GM18951 (cell line): ENCODE measurements at regions of chr13 and their contacts with region 1.

Region 1: GRCh38 chr13:49238651-49239050 is 9.1 kb upstream of the CDADC1 start:
- POLR2A ChIP-seq: no peak

Region 2: DNA sequence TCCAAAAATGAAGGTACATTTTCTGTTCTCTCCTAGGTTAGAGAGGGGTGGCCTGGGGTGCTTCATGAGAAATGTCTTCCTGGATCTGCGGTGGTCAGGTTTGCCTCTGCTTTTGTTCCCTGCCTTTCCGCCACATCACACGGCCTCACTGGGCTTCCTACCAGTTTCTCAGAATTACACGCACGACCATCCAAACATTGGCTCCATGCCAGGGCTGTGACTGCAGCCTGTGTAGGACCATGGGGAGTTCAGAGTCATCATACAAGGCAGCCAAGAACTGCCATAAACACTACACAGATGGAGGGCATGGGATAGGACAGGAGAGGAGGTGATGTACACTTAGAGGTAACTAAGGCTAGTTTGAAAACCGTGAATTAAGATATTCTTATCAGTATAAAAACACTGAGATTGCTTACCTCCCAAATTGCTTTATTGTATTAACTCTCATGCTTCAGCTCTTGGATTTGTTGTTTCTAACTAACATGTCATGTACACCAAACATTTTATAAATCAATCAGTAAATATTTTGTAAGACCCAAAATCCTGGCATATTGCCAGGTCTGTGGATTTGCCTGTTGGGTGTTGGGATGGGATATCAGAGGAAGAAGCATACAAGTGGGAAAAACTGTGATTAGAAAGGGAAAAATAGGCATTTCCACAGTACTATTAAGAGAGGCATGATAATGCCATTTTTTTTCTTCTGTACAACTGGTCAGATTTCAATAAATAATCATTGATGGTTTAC is 54.3 kb after region 1 on chr13:
- in situ Hi-C with region 1: loop called (anchors 10 kb)
- POLR2A ChIP-seq: no peak

Region 3: GRCh38 chr13:49367640-49368422 is 129.2 kb after region 1 on chr13:
- in situ Hi-C with region 1: no loop called
- POLR2A ChIP-seq: no peak

Region 4: DNA sequence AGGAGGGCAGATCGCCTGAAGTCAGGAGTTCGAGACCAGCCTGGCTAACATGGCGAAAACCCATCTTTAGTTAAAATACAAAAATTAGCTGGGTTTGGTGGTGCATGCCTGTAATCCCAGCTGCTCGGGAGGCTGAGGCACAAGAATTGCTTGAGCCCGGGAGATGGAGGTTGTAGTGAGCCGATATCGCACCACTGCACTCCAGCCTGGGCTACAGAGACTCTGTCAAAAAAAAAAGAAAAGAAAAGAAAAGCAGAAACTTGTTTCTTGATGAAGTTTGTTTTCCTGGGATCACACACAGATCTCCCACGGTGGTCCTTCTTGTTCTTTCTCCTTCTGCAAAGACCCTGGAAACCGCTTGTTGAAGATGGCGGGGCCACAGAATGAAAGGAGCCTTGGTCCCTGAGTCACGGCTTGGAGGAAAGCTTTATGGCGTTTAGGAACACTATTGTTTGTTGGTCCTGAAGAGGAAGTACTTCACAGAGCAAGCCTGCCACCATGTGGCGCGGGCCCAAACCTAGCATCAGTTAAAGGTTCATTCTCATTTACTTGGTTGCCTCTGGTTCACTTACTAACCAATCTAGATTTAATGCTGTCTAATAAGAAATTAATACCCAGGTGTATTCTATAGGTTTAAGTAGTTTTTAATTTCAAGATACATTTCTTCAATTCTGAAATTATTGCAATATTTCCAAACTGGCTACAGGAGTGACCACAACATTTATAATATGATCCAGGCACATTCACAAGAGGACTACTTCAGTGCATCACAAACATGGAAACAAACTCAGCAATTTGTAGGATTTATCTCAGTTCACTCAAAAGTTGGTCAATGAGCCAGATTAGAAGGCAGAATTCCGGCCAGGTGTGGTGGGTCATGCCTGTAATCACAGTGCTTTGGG is 368.3 kb after region 1 on chr13:
- in situ Hi-C with region 1: no loop called
- POLR2A ChIP-seq: no peak